Heart right ventricle (tissue), 16 donors: ENCODE measurements at regions of chr6 and their contacts with region 1.

Region 1: DNA sequence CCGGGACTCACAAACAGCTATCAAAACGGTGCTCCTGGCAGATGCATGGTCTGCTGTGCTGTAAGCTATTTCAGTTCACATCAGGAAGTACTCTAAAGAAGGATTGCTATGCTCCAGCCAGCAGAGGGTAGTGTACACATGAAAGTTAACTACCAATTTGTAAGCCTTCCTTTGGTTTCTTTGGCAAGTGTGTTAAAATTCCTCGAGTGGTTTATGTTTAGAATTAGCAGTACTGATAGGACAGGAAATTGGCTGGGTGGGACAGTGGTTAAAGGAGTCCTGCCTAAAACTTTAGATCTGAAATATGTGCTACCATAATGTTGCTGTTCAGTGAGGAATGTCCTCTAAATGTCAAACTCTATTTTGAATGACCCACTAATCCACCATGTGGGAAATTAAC is 47.4 kb downstream of the TRMT11 start:
- DNase-seq: peak in 1 of 2 donors; percentile 56
- ATAC-seq: peak; percentile 86 to 96 (median 92)
- H3K4me3 ChIP-seq: no peak overlapping the region
- H3K27ac ChIP-seq: no peak overlapping the region
- H3K4me1 ChIP-seq: peaks cover 3 to 16% (median 9%) of the 10 kb centered on the region in 9 donors
- H3K27me3 ChIP-seq: no peaks in the 10 kb centered on the region
- CTCF ChIP-seq: peak; percentile 25 to 75 (median 57)

Region 2: GRCh38 chr6:125931733-125932450 is 101.8 kb before region 1 on chr6:
- intact Hi-C with region 1: no loop called
- DNase-seq: no peak
- ATAC-seq: no peak
- H3K4me3 ChIP-seq: no peak overlapping the region
- H3K27ac ChIP-seq: no peak overlapping the region
- H3K4me1 ChIP-seq: peaks cover 0 to 5% (median 0%) of the 10 kb centered on the region in 9 donors
- H3K27me3 ChIP-seq: no peaks in the 10 kb centered on the region
- CTCF ChIP-seq: no peak

Region 3: GRCh38 chr6:126054258-126054702 is 20.6 kb after region 1 on chr6:
- intact Hi-C with region 1: no loop called
- DNase-seq: no peak
- ATAC-seq: peak in 4 of 8 donors; percentile 8 to 48 (median 15)
- H3K4me3 ChIP-seq: no peak overlapping the region
- H3K27ac ChIP-seq: no peak overlapping the region
- H3K4me1 ChIP-seq: peaks cover 0 to 10% (median 0%) of the 10 kb centered on the region in 9 donors
- H3K27me3 ChIP-seq: no peaks in the 10 kb centered on the region
- CTCF ChIP-seq: no peak

Region 4: DNA sequence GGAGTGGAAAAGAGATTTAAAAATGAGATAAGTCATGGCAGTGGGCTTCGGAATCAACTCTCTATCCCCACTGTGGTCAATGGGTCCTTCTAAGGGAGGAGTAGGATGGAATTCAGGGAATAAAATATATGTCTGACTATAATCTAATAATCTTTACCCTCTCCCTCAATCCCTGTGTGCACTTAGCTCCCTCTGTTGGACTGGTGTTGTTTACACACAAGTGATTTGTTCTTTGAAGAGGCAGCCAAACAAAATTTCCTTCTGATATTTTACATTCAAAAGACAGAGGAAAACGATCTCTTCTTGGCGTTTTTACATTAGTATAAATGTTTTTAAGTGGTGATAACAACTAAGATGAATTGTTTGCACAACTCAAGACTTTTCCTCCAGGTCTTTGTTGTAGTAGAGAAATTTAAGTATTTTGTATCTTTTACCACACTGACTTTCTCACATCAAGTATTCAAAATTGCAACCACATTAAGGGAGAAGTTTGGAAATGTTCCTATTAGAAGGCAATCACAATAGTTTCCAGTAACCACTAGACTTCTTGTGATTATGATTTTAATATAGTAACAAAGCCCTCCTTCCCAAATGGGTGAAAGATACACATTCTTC is 624.0 kb after region 1 on chr6:
- intact Hi-C with region 1: loop called in 1 of 10 experiments (anchors 10 kb)
- DNase-seq: no peak
- ATAC-seq: no peak
- H3K4me3 ChIP-seq: no peak overlapping the region
- H3K27ac ChIP-seq: no peak overlapping the region
- H3K4me1 ChIP-seq: no peaks in the 10 kb centered on the region
- H3K27me3 ChIP-seq: no peaks in the 10 kb centered on the region
- CTCF ChIP-seq: peak in 7 of 9 donors; percentile 18 to 40 (median 29)

Region 5: GRCh38 chr6:126804332-126805064 is 770.8 kb after region 1 on chr6:
- intact Hi-C with region 1: loop called in 1 of 10 experiments (anchors 10 kb)
- DNase-seq: peak in 1 of 2 donors; percentile 13
- ATAC-seq: peak in 5 of 8 donors; percentile 37 to 65 (median 58)
- H3K4me3 ChIP-seq: no peak overlapping the region
- H3K27ac ChIP-seq: no peak overlapping the region
- H3K4me1 ChIP-seq: no peaks in the 10 kb centered on the region
- H3K27me3 ChIP-seq: peaks cover 0 to 26% (median 3%) of the 10 kb centered on the region in 7 donors
- CTCF ChIP-seq: peak; percentile 43 to 79 (median 71)

Region 6: DNA sequence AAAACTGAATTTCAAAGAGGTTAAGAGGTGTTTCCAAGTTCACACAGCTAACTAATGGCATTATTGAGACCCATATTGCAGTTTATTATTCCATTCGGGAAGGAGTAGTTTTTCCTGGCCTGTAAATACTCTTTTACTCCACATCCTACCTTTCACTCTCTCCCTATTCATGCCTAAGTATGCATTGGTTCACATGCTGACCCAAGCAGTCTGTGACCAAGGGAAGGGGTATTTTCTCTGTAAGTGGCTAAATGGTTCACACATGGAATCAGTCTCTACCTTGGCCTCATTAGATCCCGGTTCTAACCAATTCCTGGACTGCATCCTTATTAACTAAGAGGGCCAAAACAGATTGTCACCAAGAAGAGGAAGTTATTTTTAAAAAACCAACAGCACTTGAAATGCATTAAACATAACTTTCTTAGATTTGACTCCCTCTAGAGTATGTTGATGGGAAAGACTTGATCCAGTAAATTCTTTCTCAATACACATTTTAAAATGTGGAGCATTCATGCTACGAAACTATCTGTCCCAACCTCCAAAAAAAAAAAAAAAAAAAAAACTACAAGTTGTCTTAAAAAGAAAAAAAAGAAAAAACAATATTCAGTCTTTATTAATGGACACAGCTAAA is 1066.9 kb after region 1 on chr6:
- intact Hi-C with region 1: loop called in 1 of 10 experiments (anchors 10 kb)
- DNase-seq: no peak
- ATAC-seq: no peak
- H3K4me3 ChIP-seq: no peak overlapping the region
- H3K27ac ChIP-seq: no peak overlapping the region
- H3K4me1 ChIP-seq: peaks cover 0 to 10% (median 0%) of the 10 kb centered on the region in 9 donors
- H3K27me3 ChIP-seq: peaks cover 0 to 5% (median 0%) of the 10 kb centered on the region in 7 donors
- CTCF ChIP-seq: peak in 6 of 9 donors; percentile 28 to 48 (median 38)

Region 7: GRCh38 chr6:127120787-127121636 is 1087.3 kb after region 1 on chr6:
- intact Hi-C with region 1: loop called in 2 of 10 experiments (anchors 5 to 10 kb)
- DNase-seq: peak; percentile 60 to 64
- ATAC-seq: peak; percentile 54 to 87 (median 83)
- H3K4me3 ChIP-seq: peak overlapping the region in 7 of 10 donors; percentile 31 to 60 (median 57)
- H3K27ac ChIP-seq: no peak overlapping the region
- H3K4me1 ChIP-seq: peaks cover 4 to 31% (median 25%) of the 10 kb centered on the region in 9 donors
- H3K27me3 ChIP-seq: peaks cover 10 to 96% (median 68%) of the 10 kb centered on the region in 7 donors
- CTCF ChIP-seq: peak in 8 of 9 donors; percentile 37 to 80 (median 72)

Region 8: DNA sequence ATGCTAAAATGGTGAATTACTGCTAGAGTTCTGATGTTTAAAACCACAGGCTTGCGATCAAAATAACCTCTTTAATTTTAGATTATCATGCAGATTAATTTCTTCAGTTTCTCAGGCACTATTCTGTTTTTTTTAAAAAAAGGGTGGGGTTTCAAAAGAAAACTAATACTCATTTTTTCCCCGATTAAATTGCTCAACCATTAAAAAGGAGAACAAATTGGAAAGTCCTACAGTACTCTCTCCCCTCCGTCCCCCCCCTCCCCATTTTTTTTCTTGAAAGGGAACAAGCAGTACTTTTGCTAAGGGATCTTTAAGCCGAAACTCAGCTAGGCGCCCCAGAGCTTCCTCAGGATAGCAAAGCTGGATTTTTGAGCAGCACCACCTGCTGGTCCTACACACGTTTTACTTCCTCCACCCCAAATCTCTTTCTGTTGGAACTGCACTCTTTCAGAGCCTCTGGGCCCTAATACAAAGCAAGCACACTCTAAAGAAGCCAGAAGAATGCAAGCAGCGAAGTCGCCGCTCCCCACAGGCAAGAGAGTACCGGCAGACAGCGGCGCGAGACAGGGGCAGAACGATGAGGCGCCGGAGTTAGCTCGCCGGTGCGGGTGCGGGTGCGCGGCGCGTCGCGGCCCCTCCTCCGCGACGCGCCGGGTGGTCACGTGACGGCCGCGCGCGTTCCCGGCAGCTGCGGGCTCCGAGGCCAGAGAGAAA is 1232.6 kb after region 1 on chr6 and contains the start of gene RNF146:
- intact Hi-C with region 1: loop called in 1 of 10 experiments (anchors 10 kb)
- DNase-seq: peak; percentile 81 to 84
- ATAC-seq: peak; percentile 94 to 98 (median 96)
- H3K4me3 ChIP-seq: peak within 1 kb of the TSS; percentile 74 to 97 (median 86)
- H3K27ac ChIP-seq: peak within 1 kb of the TSS; percentile 95 to 100 (median 99)
- H3K4me1 ChIP-seq: peaks cover 0 to 45% (median 40%) of the 10 kb centered on the region in 9 donors
- H3K27me3 ChIP-seq: no peaks in the 10 kb centered on the region
- CTCF ChIP-seq: peak; percentile 53 to 87 (median 69)
- total RNA-seq, gene RNF146: 37.2 to 106 (median 56.5) TPM